ENCODE measurements at regions of chr11 and their contacts with region 1.

Region 1: DNA sequence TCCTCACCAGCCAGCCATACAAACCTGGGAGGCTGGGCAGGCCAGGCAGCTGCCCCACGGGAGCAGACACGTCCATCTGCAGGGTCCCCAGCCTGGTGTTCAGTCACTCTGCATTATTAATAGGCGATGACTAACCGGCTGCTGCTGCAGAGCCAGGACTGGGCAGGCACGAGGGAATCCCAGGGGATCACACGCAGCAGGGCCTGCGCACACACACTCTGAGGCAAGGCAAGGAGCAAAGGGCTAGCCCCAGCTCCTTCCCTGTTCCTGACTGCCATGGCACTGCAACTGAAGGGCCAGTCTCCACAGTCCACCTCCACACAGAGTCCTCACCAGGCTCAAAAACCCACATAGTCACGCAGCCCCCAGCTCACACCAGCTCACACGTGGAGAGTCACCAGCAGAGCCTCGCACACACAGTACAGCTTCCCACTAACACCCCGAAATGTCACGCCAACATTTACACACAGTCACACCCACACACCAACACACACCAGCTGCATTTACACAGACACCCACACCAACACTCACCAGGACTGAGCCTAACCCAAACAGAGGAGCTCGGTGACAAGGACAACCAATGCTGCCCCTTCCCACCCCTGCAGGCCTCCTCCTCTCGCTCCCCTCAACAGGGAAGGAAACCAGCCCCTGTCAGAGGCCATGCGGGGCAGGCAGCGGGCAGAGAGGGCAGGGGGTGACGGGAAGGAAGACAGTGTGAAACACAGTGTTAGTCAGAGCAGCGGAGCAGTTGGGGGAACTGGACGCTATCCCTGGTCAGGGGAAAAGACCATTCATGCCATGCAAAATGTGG is 47.3 kb downstream of the NRXN2 start:
- DNase-seq: no peak
- ATAC-seq: peak; percentile 48; the same call in 2 of the 3 replicates
- H3K4me3 ChIP-seq: no peak overlapping the region
- H3K27ac ChIP-seq: no peak overlapping the region
- H3K4me1 ChIP-seq: peaks cover 11% of the 10 kb centered on the region; the same call in 1 of the 2 replicates
- H3K27me3 ChIP-seq: peaks cover 10 to 76% of the 10 kb centered on the region in 2 experiments
- CTCF ChIP-seq: no peak
- EP300 ChIP-seq: no peak
- POLR2A ChIP-seq: no peak
- RAD21 ChIP-seq: no peak

Region 2: DNA sequence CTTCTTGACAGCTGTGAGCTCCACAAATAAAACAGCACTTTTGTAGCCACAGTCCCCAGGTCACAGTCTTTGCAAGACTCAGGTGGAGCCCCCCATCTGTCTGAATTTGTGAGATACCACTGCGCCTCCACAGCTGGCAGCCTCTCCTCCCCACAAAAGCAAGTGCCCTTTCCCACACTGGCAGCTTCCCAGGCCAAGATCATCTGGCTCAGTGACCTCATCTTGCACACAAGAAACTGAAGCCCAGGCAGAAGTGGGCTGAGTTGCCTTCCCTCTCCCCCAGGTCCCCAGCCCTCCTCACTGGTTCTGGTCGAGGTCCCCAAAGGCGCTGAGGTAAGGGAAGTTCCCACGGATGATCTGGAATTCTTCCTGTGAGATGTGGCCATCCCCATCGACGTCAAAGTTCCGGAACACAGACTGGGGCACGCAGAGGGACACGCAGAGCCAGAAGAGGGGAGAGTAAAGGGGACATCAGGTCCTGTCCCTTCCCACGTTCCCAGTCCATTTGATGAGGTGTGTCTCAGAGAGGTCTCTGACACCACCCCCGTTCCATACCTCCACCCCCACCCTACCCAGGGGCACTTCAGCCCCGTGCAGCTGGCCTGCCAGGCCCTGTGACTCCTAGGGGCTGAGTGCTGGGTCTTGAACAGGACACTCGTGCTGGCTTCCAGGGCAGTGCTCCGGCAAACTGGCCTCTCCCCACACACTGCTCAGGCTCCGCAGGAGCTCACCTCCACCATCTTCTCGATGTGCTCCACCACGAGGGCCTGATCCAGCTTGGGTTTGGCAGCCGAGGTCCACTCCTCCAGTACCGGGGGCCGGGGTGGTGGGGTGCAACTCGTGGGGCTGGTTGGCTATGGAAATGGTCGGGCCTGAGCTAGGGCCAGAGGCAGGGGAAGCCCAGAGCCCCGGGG is 59.4 kb after region 1 on chr11:
- CTCF ChIA-PET with region 1: no interaction called
- POLR2A ChIA-PET with region 1: no interaction called
- in situ Hi-C with region 1: loop called (anchors 5 kb)
- intact Hi-C with region 1: no loop called
- DNase-seq: no peak
- ATAC-seq: peak; percentile 62
- H3K4me3 ChIP-seq: no peak overlapping the region
- H3K27ac ChIP-seq: no peak overlapping the region
- H3K4me1 ChIP-seq: peaks cover 11% of the 10 kb centered on the region
- H3K27me3 ChIP-seq: peaks cover 3 to 43% of the 10 kb centered on the region in 2 experiments; a peak in 3 of 5 replicates
- CTCF ChIP-seq: no peak
- EP300 ChIP-seq: no peak
- POLR2A ChIP-seq: no peak
- RAD21 ChIP-seq: no peak